Endothelial cell of umbilical vein (primary cell): ENCODE measurements at regions of chr3 and their contacts with region 1.

Region 1: GRCh38 chr3:39569095-39569494 is 101.6 kb downstream of the MOBP start:
- DNase-seq: no peak
- H3K4me3 ChIP-seq: no peak overlapping the region
- H3K27ac ChIP-seq: no peak overlapping the region
- H3K4me1 ChIP-seq: no peaks in the 10 kb centered on the region
- H3K27me3 ChIP-seq: no peaks in the 10 kb centered on the region
- CTCF ChIP-seq: no peak
- POLR2A ChIP-seq: no peak

Region 2: DNA sequence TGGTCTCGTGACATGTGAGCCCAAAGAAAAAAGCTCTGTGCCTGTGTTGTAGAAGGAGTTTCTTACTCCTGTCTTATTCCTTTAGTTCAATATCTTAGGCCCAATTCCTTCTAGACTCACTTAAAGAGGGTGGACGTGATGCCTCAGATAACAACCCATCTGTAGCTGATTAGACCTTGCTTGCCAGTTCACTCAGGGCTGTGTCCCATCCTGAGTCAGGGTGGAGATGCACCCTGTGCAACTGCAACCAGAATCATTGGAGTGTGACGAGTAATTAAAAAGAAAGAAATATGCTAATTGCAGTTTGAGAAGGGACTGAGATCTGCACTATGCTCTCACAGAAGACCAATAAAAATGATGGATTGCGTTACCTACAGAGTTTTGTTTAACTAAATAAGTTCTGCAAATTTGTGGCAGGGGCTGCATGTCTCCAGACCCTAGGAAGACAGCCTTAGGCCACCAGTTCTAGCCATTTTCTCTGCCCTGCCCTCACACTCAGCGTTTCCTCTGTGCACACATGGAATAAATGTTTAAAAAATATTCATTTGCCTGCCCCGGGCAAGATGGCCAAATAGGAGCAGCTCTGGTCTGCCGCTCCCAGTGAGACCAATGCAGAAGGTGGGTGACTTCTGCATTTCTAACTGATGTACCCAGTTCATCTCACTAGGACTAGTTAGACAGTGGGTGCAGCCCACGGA is 18.6 kb before region 1 on chr3:
- CTCF ChIA-PET with region 1: no interaction called
- POLR2A ChIA-PET with region 1: no interaction called
- dilution Hi-C with region 1: no loop called
- intact Hi-C with region 1: no loop called
- DNase-seq: no peak
- H3K4me3 ChIP-seq: no peak overlapping the region
- H3K27ac ChIP-seq: no peak overlapping the region
- H3K4me1 ChIP-seq: no peaks in the 10 kb centered on the region
- H3K27me3 ChIP-seq: peaks cover 0 to 3% of the 10 kb centered on the region in 2 experiments
- CTCF ChIP-seq: no peak
- POLR2A ChIP-seq: no peak

Region 3: DNA sequence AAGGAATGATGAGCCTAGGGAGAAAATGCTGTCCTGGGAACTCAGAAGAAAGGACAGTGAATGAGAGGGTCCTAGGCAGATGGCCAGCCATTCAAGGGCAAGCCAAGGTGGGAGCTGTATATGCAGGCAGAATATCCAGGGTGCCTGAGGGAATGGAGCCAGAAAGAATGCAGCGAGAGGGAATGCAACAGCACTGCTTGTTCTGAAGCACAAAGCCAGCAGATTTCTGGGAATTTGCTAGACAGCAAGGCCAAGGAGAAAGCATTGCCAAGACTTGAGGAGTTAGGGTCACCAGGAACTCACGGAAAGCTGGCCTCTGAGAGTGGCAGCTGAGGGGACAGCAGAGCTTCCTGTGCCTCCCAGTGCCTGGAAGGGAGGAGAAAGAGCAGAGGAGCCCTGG is 440.9 kb after region 1 on chr3:
- CTCF ChIA-PET with region 1: no interaction called
- POLR2A ChIA-PET with region 1: no interaction called
- dilution Hi-C with region 1: no loop called
- intact Hi-C with region 1: loop called (anchors 10 kb)
- DNase-seq: no peak
- H3K4me3 ChIP-seq: no peak overlapping the region
- H3K27ac ChIP-seq: no peak overlapping the region
- H3K4me1 ChIP-seq: no peaks in the 10 kb centered on the region
- H3K27me3 ChIP-seq: no peaks in the 10 kb centered on the region
- CTCF ChIP-seq: no peak
- POLR2A ChIP-seq: no peak